ENCODE measurements at regions of chr1 and their contacts with region 1.

Region 1: GRCh38 chr1:117895482-117896114 is 33.8 kb downstream of the GDAP2 start:
- DNase-seq: peak; percentile 65
- H3K4me3 Mint-ChIP-seq: no peak overlapping the region
- H3K27ac Mint-ChIP-seq: no peak overlapping the region
- H3K4me1 Mint-ChIP-seq: no peaks in the 10 kb centered on the region
- H3K27me3 Mint-ChIP-seq: no peaks in the 10 kb centered on the region

Region 2: DNA sequence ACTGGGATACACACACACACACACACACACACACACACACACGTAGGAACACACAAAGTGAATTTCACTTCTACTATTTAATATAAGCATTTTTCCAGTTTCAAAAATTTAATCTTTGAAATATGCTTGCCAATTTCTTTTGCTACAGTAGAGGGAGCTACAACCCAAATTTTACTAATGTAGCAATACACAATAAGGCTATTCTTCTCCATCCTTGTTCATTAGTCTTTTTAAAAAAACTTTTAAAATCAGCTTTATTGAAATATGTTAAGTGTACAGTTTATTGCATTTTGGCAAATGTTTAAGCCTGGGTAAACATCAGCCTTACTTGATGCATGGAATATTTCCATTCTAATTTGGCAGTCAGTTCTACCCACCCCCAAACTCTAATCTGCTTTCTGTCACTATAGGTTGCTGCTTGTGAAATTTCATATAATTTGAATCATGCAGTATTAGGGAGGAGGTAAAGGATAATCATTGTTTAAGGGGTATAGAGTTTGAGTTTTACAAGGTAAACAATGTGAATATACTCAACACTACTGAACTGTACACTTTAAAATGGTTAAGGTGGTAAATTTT is 382.8 kb before region 1 on chr1:
- CTCF ChIA-PET with region 1: interaction called, 19 read pairs
- POLR2A ChIA-PET with region 1: no interaction called
- DNase-seq: no peak
- H3K4me3 Mint-ChIP-seq: no peak overlapping the region
- H3K27ac Mint-ChIP-seq: no peak overlapping the region
- H3K4me1 Mint-ChIP-seq: no peaks in the 10 kb centered on the region
- H3K27me3 Mint-ChIP-seq: no peaks in the 10 kb centered on the region

Region 3: GRCh38 chr1:117572546-117572945 is 323.1 kb before region 1 on chr1:
- CTCF ChIA-PET with region 1: no interaction called
- POLR2A ChIA-PET with region 1: no interaction called
- DNase-seq: peak; percentile 56
- H3K4me3 Mint-ChIP-seq: no peak overlapping the region
- H3K27ac Mint-ChIP-seq: peak overlapping the region; percentile 23
- H3K4me1 Mint-ChIP-seq: peaks cover 28% of the 10 kb centered on the region
- H3K27me3 Mint-ChIP-seq: no peaks in the 10 kb centered on the region

Region 4: DNA sequence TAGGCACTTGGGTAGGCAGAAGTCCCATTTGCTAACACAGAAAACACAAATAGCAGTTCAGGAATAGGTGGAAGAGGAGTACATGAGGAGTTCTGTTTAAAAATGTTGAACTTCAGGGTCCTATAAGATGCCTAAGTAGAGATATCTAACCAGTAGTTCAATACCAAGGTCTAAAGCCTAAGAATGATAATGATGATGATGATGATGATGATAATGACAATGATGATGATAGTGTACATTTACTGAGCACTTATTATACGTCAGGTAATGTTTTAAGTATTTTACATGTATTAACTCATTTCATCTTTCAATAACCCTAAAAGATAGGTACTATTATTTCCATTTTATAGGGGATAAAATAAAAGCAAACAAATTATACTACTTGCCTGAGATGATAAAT is 16.3 kb before region 1 on chr1:
- CTCF ChIA-PET with region 1: interaction called, 21 read pairs
- POLR2A ChIA-PET with region 1: no interaction called
- DNase-seq: no peak
- H3K4me3 Mint-ChIP-seq: no peak overlapping the region
- H3K27ac Mint-ChIP-seq: no peak overlapping the region
- H3K4me1 Mint-ChIP-seq: no peaks in the 10 kb centered on the region
- H3K27me3 Mint-ChIP-seq: no peaks in the 10 kb centered on the region

Region 5: DNA sequence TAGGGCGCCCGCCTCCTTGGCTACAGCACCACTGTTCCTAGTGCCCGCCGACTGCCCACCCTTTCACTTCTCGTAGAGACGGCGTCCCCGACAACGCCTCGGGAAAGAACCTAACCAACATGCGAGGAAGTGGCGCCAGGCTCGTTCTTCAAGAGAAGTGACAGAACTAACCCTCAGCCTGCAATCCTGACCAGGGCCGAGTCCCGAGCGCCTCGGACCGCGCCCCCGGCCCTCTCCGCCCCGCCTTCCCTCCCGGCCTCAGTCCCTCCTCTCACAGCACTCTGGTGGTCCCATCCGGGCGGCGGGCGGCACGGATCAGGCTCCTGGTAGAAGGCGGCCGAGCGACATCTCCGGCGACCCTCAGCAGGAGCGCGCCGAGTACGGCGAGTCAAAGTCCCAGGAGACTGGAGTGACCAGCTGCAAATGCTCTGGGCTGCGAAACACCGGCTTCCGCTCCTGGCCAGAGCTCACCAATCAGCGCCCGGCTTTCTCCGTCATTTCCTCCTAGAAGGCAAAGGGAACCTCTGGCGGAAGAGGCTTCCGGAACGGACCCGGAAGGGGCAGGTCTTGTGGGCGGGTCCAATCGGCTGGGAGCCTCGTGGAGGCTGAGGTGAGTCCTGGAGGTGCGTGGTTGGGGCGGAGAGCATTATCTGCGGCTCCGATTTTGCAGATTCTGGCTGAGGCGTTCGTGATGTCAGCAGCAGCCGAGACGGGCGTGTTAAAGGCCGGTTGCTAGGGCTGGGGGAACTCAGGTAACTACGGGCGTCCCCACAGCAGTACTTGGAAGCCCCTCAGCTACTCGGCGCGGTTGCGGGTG is 33.8 kb after region 1 on chr1 and contains the starts of genes GDAP2 and WDR3:
- CTCF ChIA-PET with region 1: interaction called, 15 read pairs
- POLR2A ChIA-PET with region 1: interaction called, 3 read pairs
- DNase-seq: peak; percentile 97
- H3K4me3 Mint-ChIP-seq: peak within 1 kb of the TSS; percentile 93
- H3K27ac Mint-ChIP-seq: peak within 1 kb of the TSS; percentile 83
- H3K4me1 Mint-ChIP-seq: peaks cover 55% of the 10 kb centered on the region
- H3K27me3 Mint-ChIP-seq: no peaks in the 10 kb centered on the region
- total RNA-seq, gene GDAP2: 20.8 to 22.9 TPM
- total RNA-seq, gene WDR3: 19.6 to 20.2 TPM

Measured in activated CD4-positive, alpha-beta memory T cell treated with anti-CD3 and anti-CD28 coated beads, Interleukin-2, amount 10 ng/mL, durations not matched to agents 7 days and 5 days (primary cell).